SK-N-SH (cell line): ENCODE measurements at regions of chr19 and their contacts with region 1.

Region 1: GRCh38 chr19:18496167-18496979 is 25.5 kb downstream of the ELL start:
- DNase-seq: no peak
- H3K4me3 ChIP-seq: no peak overlapping the region
- H3K27ac ChIP-seq: peak overlapping the region; percentile 6 to 20; a peak in 3 of 4 replicates
- H3K4me1 ChIP-seq: peaks cover 11 to 50% of the 10 kb centered on the region in 2 experiments; a peak in 2 of 4 replicates
- H3K27me3 ChIP-seq: no peaks in the 10 kb centered on the region
- CTCF ChIP-seq: no peak
- EP300 ChIP-seq: no peak
- RAD21 ChIP-seq: no peak

Region 2: GRCh38 chr19:18469069-18469846 is 27.1 kb before region 1 on chr19:
- CTCF ChIA-PET with region 1: interaction called, 12 read pairs
- POLR2A ChIA-PET with region 1: no interaction called
- DNase-seq: peak; percentile 82
- H3K4me3 ChIP-seq: no peak overlapping the region; a peak in 1 of 4 replicates
- H3K27ac ChIP-seq: no peak overlapping the region
- H3K4me1 ChIP-seq: peaks cover 0 to 5% of the 10 kb centered on the region in 2 experiments; a peak in 1 of 4 replicates
- H3K27me3 ChIP-seq: no peaks in the 10 kb centered on the region
- CTCF ChIP-seq: peak; percentile 84
- EP300 ChIP-seq: no peak
- RAD21 ChIP-seq: peak; percentile 59

Region 3: GRCh38 chr19:18542936-18543815 is 46.8 kb after region 1 on chr19 and contains the start of gene FKBP8:
- CTCF ChIA-PET with region 1: no interaction called
- POLR2A ChIA-PET with region 1: no interaction called
- DNase-seq: peak; percentile 99
- H3K4me3 ChIP-seq: peak within 1 kb of the TSS; percentile 64 to 68
- H3K27ac ChIP-seq: peak within 1 kb of the TSS; percentile 27 to 75; a peak in 3 of 4 replicates
- H3K4me1 ChIP-seq: peaks cover 0 to 15% of the 10 kb centered on the region in 2 experiments; a peak in 2 of 4 replicates
- H3K27me3 ChIP-seq: no peaks in the 10 kb centered on the region
- CTCF ChIP-seq: no peak
- EP300 ChIP-seq: no peak
- RAD21 ChIP-seq: no peak
- polyA plus RNA-seq, gene FKBP8: 227 and 273 TPM in 2 replicates

Region 4: GRCh38 chr19:18613589-18614234 is 117.3 kb after region 1 on chr19:
- CTCF ChIA-PET with region 1: no interaction called
- POLR2A ChIA-PET with region 1: no interaction called
- DNase-seq: no peak
- H3K4me3 ChIP-seq: peak overlapping the region in 1 of 2 experiments; percentile 78; a peak in 1 of 4 replicates
- H3K27ac ChIP-seq: no peak overlapping the region
- H3K4me1 ChIP-seq: peaks cover 15 to 19% of the 10 kb centered on the region in 2 experiments; a peak in 2 of 4 replicates
- H3K27me3 ChIP-seq: peaks cover 36% of the 10 kb centered on the region
- CTCF ChIP-seq: no peak
- EP300 ChIP-seq: no peak
- RAD21 ChIP-seq: no peak